Activated B cell treated with CpG ODN at 0.5 μM for 24 hours (primary cell): ENCODE measurements at regions of chr9 and their contacts with region 1.

Region 1: DNA sequence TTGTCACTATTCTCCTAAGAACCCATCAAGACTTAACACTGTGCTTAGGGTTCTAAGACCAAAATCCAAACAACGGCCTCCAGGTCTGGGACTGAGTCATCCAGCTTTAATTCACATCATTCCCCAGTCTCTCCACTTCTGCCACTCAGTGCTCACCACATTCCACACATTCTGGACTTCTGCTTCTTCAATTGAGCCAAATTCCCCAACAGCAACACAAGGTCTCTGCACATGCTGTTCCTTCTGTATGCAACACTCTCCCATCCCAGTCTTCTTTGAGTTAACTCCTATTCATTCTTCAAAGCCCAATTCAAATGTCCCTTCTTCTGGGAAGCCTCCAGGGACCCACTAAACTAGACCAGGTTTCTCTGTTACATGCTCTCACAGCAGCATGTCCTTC is 97.8 kb downstream of the GPR21 start:
- DNase-seq: no peak
- ATAC-seq: no peak
- H3K4me3 Mint-ChIP-seq: no peak overlapping the region
- H3K27ac Mint-ChIP-seq: no peak overlapping the region
- H3K4me1 Mint-ChIP-seq: peaks cover 17% of the 10 kb centered on the region
- H3K27me3 Mint-ChIP-seq: no peaks in the 10 kb centered on the region
- CTCF ChIP-seq: no peak

Region 2: DNA sequence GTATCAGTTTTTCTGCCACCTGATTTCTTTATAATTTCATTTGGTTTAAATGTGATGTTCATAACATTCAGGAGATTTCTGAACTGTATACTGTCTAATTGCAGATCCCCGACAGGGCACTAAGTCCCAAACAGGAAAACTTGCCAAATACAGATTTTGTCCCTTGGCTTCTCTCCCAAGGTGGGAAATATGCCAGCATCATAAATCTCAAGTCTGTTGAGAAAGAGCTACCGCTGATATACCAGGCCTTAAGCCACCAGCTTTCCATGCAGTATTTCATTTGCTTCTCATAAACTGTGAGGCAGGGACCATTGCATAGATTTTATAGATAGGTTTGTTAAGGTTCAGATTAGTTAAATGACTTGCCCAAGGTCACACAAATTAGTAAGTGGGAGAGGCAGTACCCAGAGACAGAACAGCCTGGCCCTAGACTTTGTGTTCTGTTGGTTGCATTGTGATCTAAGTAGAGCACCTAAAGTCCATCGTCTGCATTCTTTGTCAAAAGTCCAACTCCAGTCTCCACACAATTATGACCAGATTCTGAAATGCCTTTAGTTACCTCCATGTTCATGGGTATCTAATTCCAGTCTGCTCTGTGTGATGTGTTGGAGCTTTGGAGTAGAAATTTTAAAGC is 81.6 kb before region 1 on chr9:
- CTCF ChIA-PET with region 1: no interaction called
- POLR2A ChIA-PET with region 1: no interaction called
- intact Hi-C with region 1: no loop called
- DNase-seq: no peak
- ATAC-seq: no peak
- H3K4me3 Mint-ChIP-seq: no peak overlapping the region
- H3K27ac Mint-ChIP-seq: no peak overlapping the region
- H3K4me1 Mint-ChIP-seq: peaks cover 9% of the 10 kb centered on the region
- H3K27me3 Mint-ChIP-seq: no peaks in the 10 kb centered on the region
- CTCF ChIP-seq: no peak

Region 3: DNA sequence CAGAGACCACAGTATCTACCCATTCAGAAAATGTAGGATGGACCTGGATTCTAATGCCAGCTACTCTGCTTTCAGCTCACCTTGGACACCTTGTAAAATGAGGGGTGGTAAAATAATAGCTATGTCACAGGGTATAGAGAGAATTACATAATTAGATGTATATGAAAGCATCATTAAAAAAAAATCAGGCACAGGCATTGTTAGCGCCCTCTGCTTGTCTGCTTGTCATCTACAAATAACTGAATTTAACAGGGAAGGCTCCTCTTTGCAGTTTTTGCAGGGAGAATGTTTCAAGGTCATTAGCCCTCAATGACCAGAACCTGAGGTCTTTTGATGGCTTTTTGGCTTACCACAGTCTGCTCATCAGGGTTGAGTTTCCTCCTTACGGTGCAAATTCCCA is 39.8 kb before region 1 on chr9:
- CTCF ChIA-PET with region 1: no interaction called
- POLR2A ChIA-PET with region 1: interaction called, 17 read pairs
- intact Hi-C with region 1: loop called (anchors 5 kb)
- DNase-seq: no peak
- ATAC-seq: no peak
- H3K4me3 Mint-ChIP-seq: no peak overlapping the region
- H3K27ac Mint-ChIP-seq: no peak overlapping the region
- H3K4me1 Mint-ChIP-seq: peaks cover 75% of the 10 kb centered on the region
- H3K27me3 Mint-ChIP-seq: no peaks in the 10 kb centered on the region
- CTCF ChIP-seq: no peak

Region 4: GRCh38 chr9:123150708-123151503 is 19.6 kb after region 1 on chr9:
- CTCF ChIA-PET with region 1: no interaction called
- POLR2A ChIA-PET with region 1: no interaction called
- intact Hi-C with region 1: no loop called
- DNase-seq: no peak
- ATAC-seq: no peak
- H3K4me3 Mint-ChIP-seq: no peak overlapping the region
- H3K27ac Mint-ChIP-seq: no peak overlapping the region
- H3K4me1 Mint-ChIP-seq: no peaks in the 10 kb centered on the region
- H3K27me3 Mint-ChIP-seq: no peaks in the 10 kb centered on the region
- CTCF ChIP-seq: no peak

Region 5: GRCh38 chr9:123168586-123168985 is 37.3 kb after region 1 on chr9:
- CTCF ChIA-PET with region 1: interaction called, 3 read pairs
- POLR2A ChIA-PET with region 1: no interaction called
- intact Hi-C with region 1: loop called (anchors 5 kb)
- DNase-seq: no peak
- ATAC-seq: no peak
- H3K4me3 Mint-ChIP-seq: no peak overlapping the region
- H3K27ac Mint-ChIP-seq: peak overlapping the region; percentile 71
- H3K4me1 Mint-ChIP-seq: peaks cover 84% of the 10 kb centered on the region
- H3K27me3 Mint-ChIP-seq: no peaks in the 10 kb centered on the region
- CTCF ChIP-seq: no peak